H1 (cell line): ENCODE measurements at regions of chr4 and their contacts with region 1.

Region 1: DNA sequence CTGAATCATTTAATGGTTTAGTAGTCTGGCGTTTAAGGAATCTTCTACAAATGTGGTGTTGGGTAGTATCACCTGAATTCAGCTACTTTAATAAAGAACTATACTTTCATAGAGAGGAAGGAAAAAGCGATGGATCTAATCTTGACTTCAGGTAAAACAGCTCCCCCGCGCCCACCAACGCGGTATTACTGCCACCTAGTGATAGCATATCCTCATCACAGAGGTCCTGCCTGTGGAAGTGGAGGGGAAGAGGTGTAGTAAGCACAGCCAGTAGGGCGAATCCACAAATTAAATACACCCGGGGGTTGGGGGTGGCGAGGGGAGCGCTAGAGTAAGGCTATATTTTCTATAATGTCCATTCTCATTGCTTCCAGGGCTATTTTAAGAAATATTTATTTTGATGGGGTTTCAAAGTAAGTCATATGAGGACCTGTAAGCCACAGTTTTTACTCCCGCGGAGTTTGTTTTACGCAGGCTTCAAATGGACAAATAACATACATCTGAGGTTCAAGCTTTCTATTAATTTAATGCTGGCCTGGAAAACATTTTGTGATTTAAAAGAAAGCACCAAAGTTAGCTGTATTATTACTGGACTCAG is 8.3 kb upstream of the DAPP1 start:
- DNase-seq: peak in 1 of 2 experiments; percentile 83
- H3K4me3 ChIP-seq: no peak overlapping the region
- H3K27ac ChIP-seq: no peak overlapping the region
- H3K4me1 ChIP-seq: peaks cover 0 to 2% (median 0%) of the 10 kb centered on the region in 4 experiments; a peak in 1 of 7 replicates
- H3K27me3 ChIP-seq: no peaks in the 10 kb centered on the region
- CTCF ChIP-seq: peak; percentile 74 to 89 (median 79)
- EP300 ChIP-seq: no peak
- POLR2A ChIP-seq: no peak
- RAD21 ChIP-seq: peak; percentile 96 to 97

Region 2: GRCh38 chr4:99473131-99473530 is 335.2 kb before region 1 on chr4:
- CTCF ChIA-PET with region 1: interaction called, 15 read pairs
- POLR2A ChIA-PET with region 1: no interaction called
- DNase-seq: no peak
- H3K4me3 ChIP-seq: no peak overlapping the region
- H3K27ac ChIP-seq: no peak overlapping the region
- H3K4me1 ChIP-seq: no peaks in the 10 kb centered on the region
- H3K27me3 ChIP-seq: no peaks in the 10 kb centered on the region
- CTCF ChIP-seq: no peak
- EP300 ChIP-seq: no peak
- POLR2A ChIP-seq: no peak
- RAD21 ChIP-seq: no peak

Region 3: DNA sequence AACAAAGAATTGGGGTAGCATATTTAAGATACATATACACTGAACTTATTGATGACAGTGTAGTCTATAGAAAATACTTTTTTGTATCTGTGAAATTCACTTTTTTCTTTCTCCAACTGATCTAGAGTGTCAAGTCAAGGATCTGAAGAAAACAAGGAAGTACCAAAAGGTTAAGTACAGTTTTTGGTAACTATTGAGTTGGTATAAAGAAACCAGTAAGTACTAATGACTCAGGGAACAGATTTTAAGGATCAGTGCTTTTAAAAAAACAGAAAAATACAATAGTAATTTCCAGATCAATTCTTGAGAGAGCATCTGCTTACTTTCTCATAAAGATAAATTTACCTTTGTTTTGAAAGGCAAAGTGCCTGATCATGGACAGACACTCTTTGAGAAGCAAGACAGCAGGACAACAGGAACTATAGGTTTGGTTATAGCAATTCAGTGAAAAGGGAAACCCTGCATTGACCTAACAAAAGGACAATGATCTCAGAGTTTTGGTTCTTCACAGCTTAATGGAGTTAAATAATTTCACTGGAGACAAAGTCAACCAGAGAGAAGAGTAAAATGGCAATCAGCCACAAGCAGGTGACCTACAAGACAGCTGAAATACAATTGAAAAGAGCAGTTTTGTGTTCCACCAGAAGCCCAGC is 267.9 kb before region 1 on chr4:
- CTCF ChIA-PET with region 1: interaction called, 16 read pairs
- POLR2A ChIA-PET with region 1: no interaction called
- DNase-seq: no peak
- H3K4me3 ChIP-seq: no peak overlapping the region
- H3K27ac ChIP-seq: no peak overlapping the region
- H3K4me1 ChIP-seq: no peaks in the 10 kb centered on the region
- H3K27me3 ChIP-seq: no peaks in the 10 kb centered on the region
- CTCF ChIP-seq: no peak
- EP300 ChIP-seq: no peak
- POLR2A ChIP-seq: no peak
- RAD21 ChIP-seq: no peak

Region 4: DNA sequence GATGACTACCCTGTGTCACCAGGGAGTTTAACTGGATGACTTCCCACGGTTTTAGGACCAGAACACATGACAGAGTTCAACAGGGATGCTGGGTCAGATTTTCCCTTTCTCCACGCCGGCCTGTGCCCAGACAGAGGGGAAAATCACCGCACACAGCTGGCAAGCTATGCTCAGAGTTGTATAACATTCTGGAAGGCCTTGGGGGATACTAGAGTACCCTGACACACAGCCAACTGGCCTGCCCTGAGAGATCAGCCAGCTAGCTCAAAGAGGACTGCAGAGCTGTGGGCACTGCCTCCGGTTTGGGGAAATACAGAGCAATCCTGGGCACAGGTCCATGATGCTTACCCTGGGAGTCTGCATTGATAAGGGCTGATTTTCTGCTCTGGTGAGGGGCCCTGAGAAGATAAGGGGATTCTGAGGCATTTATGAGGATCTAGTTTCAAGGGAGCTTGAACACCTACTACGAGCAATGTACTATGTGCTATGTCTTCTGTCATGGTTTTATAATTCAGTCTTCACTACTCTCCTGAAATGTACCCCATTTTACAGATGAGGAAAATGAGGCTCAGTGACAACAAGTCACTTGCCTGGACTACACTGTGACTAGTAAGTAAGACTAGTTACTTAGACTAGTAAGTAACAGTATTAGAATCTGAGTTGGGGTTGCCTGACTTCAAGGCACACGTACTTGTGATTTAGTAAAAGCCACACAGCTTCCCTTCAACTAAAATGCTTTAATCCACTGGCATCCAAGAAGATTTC is 165.5 kb before region 1 on chr4:
- CTCF ChIA-PET with region 1: interaction called, 10 read pairs
- POLR2A ChIA-PET with region 1: no interaction called
- DNase-seq: no peak
- H3K4me3 ChIP-seq: no peak overlapping the region
- H3K27ac ChIP-seq: no peak overlapping the region
- H3K4me1 ChIP-seq: peaks cover 0 to 10% (median 6%) of the 10 kb centered on the region in 4 experiments; a peak in 2 of 7 replicates
- H3K27me3 ChIP-seq: peaks cover 4 to 20% (median 6%) of the 10 kb centered on the region in 4 experiments; a peak in 5 of 7 replicates
- CTCF ChIP-seq: no peak
- EP300 ChIP-seq: no peak
- POLR2A ChIP-seq: no peak
- RAD21 ChIP-seq: no peak

Region 5: GRCh38 chr4:99723612-99724011 is 84.7 kb before region 1 on chr4:
- CTCF ChIA-PET with region 1: interaction called, 26 read pairs
- POLR2A ChIA-PET with region 1: no interaction called
- DNase-seq: no peak
- H3K4me3 ChIP-seq: no peak overlapping the region
- H3K27ac ChIP-seq: no peak overlapping the region
- H3K4me1 ChIP-seq: peaks cover 0 to 8% (median 1%) of the 10 kb centered on the region in 4 experiments; a peak in 5 of 7 replicates
- H3K27me3 ChIP-seq: no peaks in the 10 kb centered on the region
- CTCF ChIP-seq: no peak
- EP300 ChIP-seq: no peak
- POLR2A ChIP-seq: no peak
- RAD21 ChIP-seq: no peak

Region 6: GRCh38 chr4:99735822-99736221 is 72.5 kb before region 1 on chr4:
- CTCF ChIA-PET with region 1: no interaction called
- POLR2A ChIA-PET with region 1: no interaction called
- DNase-seq: no peak
- H3K4me3 ChIP-seq: no peak overlapping the region
- H3K27ac ChIP-seq: no peak overlapping the region
- H3K4me1 ChIP-seq: no peaks in the 10 kb centered on the region
- H3K27me3 ChIP-seq: no peaks in the 10 kb centered on the region
- CTCF ChIP-seq: no peak
- EP300 ChIP-seq: no peak
- POLR2A ChIP-seq: no peak
- RAD21 ChIP-seq: no peak

Region 7: DNA sequence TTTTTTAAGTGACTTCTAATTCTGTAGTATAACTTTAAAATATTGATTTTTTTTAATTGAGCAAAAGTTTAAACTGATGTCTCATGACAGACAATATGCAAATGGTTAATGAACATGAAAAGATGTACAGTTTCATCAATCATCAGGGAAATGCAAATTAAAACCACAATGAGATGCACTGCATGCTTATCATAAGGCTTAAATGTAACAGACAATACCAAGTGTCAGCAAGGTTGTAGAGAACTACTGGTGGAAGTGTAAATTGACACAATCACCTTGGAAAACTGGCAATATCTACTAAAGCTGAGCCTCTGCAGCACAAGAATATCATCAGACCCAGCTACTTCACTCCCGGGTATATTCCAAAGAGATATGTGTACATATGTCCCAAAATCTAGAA is 61.9 kb before region 1 on chr4:
- CTCF ChIA-PET with region 1: no interaction called
- POLR2A ChIA-PET with region 1: no interaction called
- DNase-seq: no peak
- H3K4me3 ChIP-seq: no peak overlapping the region
- H3K27ac ChIP-seq: no peak overlapping the region
- H3K4me1 ChIP-seq: no peaks in the 10 kb centered on the region
- H3K27me3 ChIP-seq: no peaks in the 10 kb centered on the region
- CTCF ChIP-seq: no peak
- EP300 ChIP-seq: no peak
- POLR2A ChIP-seq: no peak
- RAD21 ChIP-seq: no peak

Region 8: DNA sequence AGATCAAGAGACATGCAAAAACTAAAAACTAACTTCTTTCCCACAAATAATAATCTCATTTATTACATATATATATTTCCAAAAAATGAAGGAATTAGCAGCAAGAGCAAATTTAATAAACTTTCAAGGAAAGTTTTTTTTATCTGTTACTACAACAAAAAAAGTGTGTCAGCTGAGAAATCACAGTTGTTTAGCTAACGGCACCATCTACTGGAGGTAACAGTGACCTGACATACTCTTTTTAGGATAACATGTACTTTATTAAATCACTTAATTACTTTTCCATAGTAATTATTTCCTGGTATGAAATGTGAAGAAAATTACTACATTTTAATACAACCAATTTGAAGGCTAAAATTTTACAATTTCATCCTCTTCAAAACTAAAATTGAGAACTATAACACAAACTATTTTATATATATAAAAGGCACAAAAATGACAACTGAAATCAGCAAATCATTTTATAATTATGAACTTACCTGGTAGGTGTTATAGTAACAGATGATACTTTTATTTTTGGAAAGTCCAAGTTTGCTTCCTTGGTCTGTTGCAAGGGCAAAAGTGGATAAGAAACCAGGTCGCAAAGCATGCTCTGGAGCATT is 76.8 kb after region 1 on chr4:
- CTCF ChIA-PET with region 1: interaction called, 13 read pairs
- POLR2A ChIA-PET with region 1: interaction called, 3 read pairs
- DNase-seq: no peak
- H3K4me3 ChIP-seq: no peak overlapping the region
- H3K27ac ChIP-seq: no peak overlapping the region
- H3K4me1 ChIP-seq: no peaks in the 10 kb centered on the region
- H3K27me3 ChIP-seq: no peaks in the 10 kb centered on the region
- CTCF ChIP-seq: peak in 2 of 3 experiments; percentile 42 to 49; a peak in 2 of 4 replicates
- EP300 ChIP-seq: no peak
- POLR2A ChIP-seq: no peak
- RAD21 ChIP-seq: peak; percentile 71 to 79

Region 9: GRCh38 chr4:99986792-99987191 is 178.4 kb after region 1 on chr4:
- CTCF ChIA-PET with region 1: no interaction called
- POLR2A ChIA-PET with region 1: no interaction called
- DNase-seq: no peak
- H3K4me3 ChIP-seq: no peak overlapping the region
- H3K27ac ChIP-seq: no peak overlapping the region
- H3K4me1 ChIP-seq: no peaks in the 10 kb centered on the region
- H3K27me3 ChIP-seq: no peaks in the 10 kb centered on the region
- CTCF ChIP-seq: no peak
- EP300 ChIP-seq: no peak
- POLR2A ChIP-seq: no peak
- RAD21 ChIP-seq: no peak

Region 10: DNA sequence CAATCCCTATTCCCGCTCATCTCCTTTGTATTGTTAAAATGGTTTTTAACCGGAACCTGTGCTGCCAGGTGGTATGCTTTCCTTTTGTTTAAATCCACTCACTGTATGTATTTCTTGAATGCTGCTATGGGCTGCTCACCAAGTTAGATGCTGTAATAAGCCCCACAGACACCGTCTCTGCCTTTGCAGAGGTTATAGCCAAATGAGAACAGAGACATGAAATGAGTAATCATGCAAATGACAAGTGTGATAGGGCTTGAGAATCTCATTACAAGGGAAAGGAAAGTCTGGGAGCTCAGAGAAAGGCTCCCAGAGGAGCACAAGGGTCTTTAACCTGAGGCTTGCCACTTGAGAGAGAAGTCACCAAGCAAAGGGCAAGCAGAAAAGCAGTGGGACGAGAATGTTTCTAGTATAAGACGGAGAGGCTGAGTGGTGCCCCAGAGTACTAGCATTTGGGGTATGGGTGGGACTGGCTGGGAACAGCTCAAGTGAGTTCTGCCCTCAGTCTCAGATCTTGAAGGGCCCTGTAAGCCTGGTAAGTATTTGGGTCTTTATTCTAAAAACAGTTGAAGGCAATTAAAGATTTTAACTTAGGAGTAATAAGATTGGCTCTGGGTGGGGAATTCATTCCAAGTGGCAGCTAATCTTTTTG is 252.5 kb after region 1 on chr4:
- CTCF ChIA-PET with region 1: no interaction called
- POLR2A ChIA-PET with region 1: no interaction called
- DNase-seq: no peak
- H3K4me3 ChIP-seq: no peak overlapping the region
- H3K27ac ChIP-seq: no peak overlapping the region
- H3K4me1 ChIP-seq: peaks cover 0 to 6% (median 0%) of the 10 kb centered on the region in 4 experiments; a peak in 1 of 7 replicates
- H3K27me3 ChIP-seq: no peaks in the 10 kb centered on the region
- CTCF ChIP-seq: no peak
- EP300 ChIP-seq: no peak
- POLR2A ChIP-seq: no peak
- RAD21 ChIP-seq: no peak